ENCODE measurements at regions of chr18 and their contacts with region 1.

Region 1: GRCh38 chr18:56716692-56717146 is 65.6 kb downstream of the WDR7 start:
- DNase-seq: no peak
- ATAC-seq: no peak
- H3K4me3 ChIP-seq: no peak overlapping the region
- H3K4me3 Mint-ChIP-seq: no peak overlapping the region
- H3K27ac ChIP-seq: no peak overlapping the region
- H3K27ac Mint-ChIP-seq: no peak overlapping the region
- H3K4me1 ChIP-seq: no peaks in the 10 kb centered on the region
- H3K4me1 Mint-ChIP-seq: peaks cover 4 to 9% (median 4%) of the 10 kb centered on the region in 3 donors
- H3K27me3 ChIP-seq: no peaks in the 10 kb centered on the region
- H3K27me3 Mint-ChIP-seq: no peaks in the 10 kb centered on the region

Region 2: GRCh38 chr18:54938506-54938905 is 1778.2 kb before region 1 on chr18:
- CTCF ChIA-PET with region 1: no interaction called
- POLR2A ChIA-PET with region 1: interaction called in 1 of 2 experiments, 16 read pairs
- DNase-seq: no peak
- ATAC-seq: no peak
- H3K4me3 ChIP-seq: no peak overlapping the region
- H3K4me3 Mint-ChIP-seq: no peak overlapping the region
- H3K27ac ChIP-seq: no peak overlapping the region
- H3K27ac Mint-ChIP-seq: no peak overlapping the region
- H3K4me1 ChIP-seq: no peaks in the 10 kb centered on the region
- H3K4me1 Mint-ChIP-seq: no peaks in the 10 kb centered on the region
- H3K27me3 ChIP-seq: peaks cover 0 to 4% of the 10 kb centered on the region in 2 experiments
- H3K27me3 Mint-ChIP-seq: no peaks in the 10 kb centered on the region

Measured in T-cell (primary cell).